ENCODE measurements at regions of chr1 and their contacts with region 1.

Region 1: GRCh38 chr1:153633716-153634665 is at the start of gene CHTOP:
- DNase-seq: peak; percentile 99
- ATAC-seq: peak; percentile 94
- H3K4me3 Mint-ChIP-seq: peak within 1 kb of the TSS; percentile 92
- H3K27ac Mint-ChIP-seq: peak within 1 kb of the TSS; percentile 100
- H3K4me1 Mint-ChIP-seq: peaks cover 27% of the 10 kb centered on the region
- H3K27me3 Mint-ChIP-seq: no peaks in the 10 kb centered on the region
- total RNA-seq, gene CHTOP: 98.1 to 105 TPM

Region 2: GRCh38 chr1:153494976-153495535 is 138.9 kb before region 1 on chr1:
- POLR2A ChIA-PET with region 1: no interaction called
- DNase-seq: peak; percentile 78
- ATAC-seq: no peak
- H3K4me3 Mint-ChIP-seq: no peak overlapping the region
- H3K27ac Mint-ChIP-seq: no peak overlapping the region
- H3K4me1 Mint-ChIP-seq: peaks cover 2% of the 10 kb centered on the region
- H3K27me3 Mint-ChIP-seq: peaks cover 37% of the 10 kb centered on the region

Region 3: DNA sequence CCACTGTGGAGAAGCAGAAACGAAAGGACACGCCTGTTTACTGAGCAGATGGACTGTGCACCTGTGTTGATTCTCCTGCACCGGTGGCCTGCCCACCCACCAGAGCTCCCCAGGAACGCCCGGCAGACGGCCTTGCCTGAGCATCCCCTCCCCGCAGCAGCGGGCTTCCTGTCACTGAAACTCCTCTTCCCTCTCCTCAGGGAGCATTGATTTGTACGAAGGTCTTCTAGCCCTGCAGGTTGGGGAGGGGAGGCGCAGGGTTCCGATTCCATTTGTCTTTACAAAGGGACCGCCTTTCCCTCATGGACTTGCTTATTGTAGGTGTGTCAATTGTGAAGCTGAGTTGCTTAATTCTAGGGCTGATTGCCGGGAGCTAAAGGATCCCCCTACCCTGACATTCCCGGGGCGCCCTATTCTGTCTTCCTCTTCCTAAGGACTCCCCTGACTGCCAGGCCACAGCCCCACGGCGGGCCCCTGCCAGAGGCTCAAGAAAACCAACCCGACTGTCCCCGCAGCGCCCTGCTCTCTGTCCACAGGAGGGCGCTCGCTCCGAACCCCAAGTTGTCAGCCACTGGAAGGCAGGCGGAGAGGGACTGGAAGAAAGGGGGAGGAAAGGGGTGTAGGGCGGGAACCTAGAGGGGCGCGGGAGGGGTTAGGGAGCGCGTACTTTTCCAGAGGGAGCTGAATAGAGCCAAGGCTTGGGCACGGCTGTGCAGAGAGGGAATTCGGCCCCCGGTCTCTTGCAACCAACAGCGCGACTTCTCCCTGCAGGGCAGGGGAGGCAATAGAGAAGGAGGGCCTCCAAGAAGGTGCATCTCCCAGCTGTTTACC is 101.0 kb before region 1 on chr1:
- POLR2A ChIA-PET with region 1: interaction called, 16 read pairs
- DNase-seq: peak; percentile 87
- ATAC-seq: peak; percentile 14
- H3K4me3 Mint-ChIP-seq: peak overlapping the region; percentile 91
- H3K27ac Mint-ChIP-seq: peak overlapping the region; percentile 89
- H3K4me1 Mint-ChIP-seq: peaks cover 44% of the 10 kb centered on the region
- H3K27me3 Mint-ChIP-seq: no peaks in the 10 kb centered on the region

Region 4: GRCh38 chr1:153587314-153587713 is 46.7 kb before region 1 on chr1:
- POLR2A ChIA-PET with region 1: no interaction called
- DNase-seq: no peak
- ATAC-seq: no peak
- H3K4me3 Mint-ChIP-seq: no peak overlapping the region
- H3K27ac Mint-ChIP-seq: no peak overlapping the region
- H3K4me1 Mint-ChIP-seq: no peaks in the 10 kb centered on the region
- H3K27me3 Mint-ChIP-seq: peaks cover 23% of the 10 kb centered on the region

Region 5: GRCh38 chr1:153598309-153599172 is 35.5 kb before region 1 on chr1:
- POLR2A ChIA-PET with region 1: interaction called, 14 read pairs
- DNase-seq: peak; percentile 53
- ATAC-seq: peak; percentile 98
- H3K4me3 Mint-ChIP-seq: peak overlapping the region; percentile 42
- H3K27ac Mint-ChIP-seq: peak overlapping the region; percentile 88
- H3K4me1 Mint-ChIP-seq: peaks cover 20% of the 10 kb centered on the region
- H3K27me3 Mint-ChIP-seq: no peaks in the 10 kb centered on the region

Region 6: DNA sequence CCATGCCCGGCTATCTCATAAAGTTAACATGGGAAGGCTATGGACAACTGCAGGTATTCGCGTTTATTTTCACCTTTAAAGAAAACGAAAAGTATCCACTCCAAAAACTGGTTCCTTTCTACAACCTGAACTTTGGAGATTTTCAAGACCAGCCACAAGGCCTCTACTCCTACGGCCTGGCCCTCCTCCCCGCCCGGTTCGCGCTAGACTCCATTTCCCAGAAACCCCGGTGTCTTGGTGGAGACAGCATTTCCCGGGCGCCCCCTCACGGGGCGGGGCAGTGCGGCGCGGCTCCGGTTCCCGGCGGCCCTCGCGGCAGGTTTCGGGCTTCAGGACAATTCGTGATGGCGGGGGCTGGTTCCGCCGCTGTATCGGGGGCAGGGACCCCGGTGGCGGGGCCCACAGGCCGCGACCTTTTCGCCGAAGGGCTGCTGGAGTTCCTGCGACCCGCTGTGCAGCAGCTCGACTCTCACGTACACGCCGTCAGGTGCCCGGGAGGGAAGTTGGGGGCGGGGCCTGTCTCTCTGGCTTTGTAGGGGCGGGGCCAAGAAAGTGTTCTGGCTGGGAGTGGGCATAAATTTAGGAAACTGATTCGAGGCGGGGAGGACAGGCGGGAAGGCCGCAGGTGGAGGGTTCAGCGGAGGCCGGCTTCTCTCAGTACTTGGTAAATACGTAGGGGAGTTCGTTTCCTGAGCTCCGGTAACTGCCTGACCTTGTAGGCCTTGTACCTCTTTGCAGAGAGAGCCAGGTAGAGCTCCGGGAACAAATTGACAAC is 24.6 kb after region 1 on chr1 and contains the start of gene SNAPIN:
- POLR2A ChIA-PET with region 1: interaction called, 16 read pairs
- DNase-seq: peak; percentile 95
- ATAC-seq: peak; percentile 100
- H3K4me3 Mint-ChIP-seq: peak within 1 kb of the TSS; percentile 95
- H3K27ac Mint-ChIP-seq: peak within 1 kb of the TSS; percentile 89
- H3K4me1 Mint-ChIP-seq: peaks cover 18% of the 10 kb centered on the region
- H3K27me3 Mint-ChIP-seq: no peaks in the 10 kb centered on the region
- total RNA-seq, gene SNAPIN: 37.9 TPM

Region 7: GRCh38 chr1:153727463-153728304 is 93.7 kb after region 1 on chr1 and contains the start of gene INTS3:
- POLR2A ChIA-PET with region 1: interaction called, 11 read pairs
- DNase-seq: peak; percentile 95
- ATAC-seq: peak; percentile 100
- H3K4me3 Mint-ChIP-seq: peak within 1 kb of the TSS; percentile 96
- H3K27ac Mint-ChIP-seq: peak within 1 kb of the TSS; percentile 94
- H3K4me1 Mint-ChIP-seq: peaks cover 25% of the 10 kb centered on the region
- H3K27me3 Mint-ChIP-seq: no peaks in the 10 kb centered on the region
- total RNA-seq, gene INTS3: 53.6 to 57.2 TPM